HCT116 (cell line): ENCODE measurements at regions of chr21 and their contacts with region 1.

Region 1: GRCh38 chr21:33449616-33450015 is 30.2 kb downstream of the TMEM50B start:
- DNase-seq: no peak
- ATAC-seq: no peak
- H3K4me3 ChIP-seq: no peak overlapping the region
- H3K27ac ChIP-seq: no peak overlapping the region
- H3K4me1 ChIP-seq: peaks cover 3 to 6% of the 10 kb centered on the region in 2 experiments; a peak in 1 of 4 replicates
- H3K27me3 ChIP-seq: no peaks in the 10 kb centered on the region
- CTCF ChIP-seq: no peak
- POLR2A ChIP-seq: no peak
- RAD21 ChIP-seq: no peak

Region 2: GRCh38 chr21:32844653-32845436 is 604.8 kb before region 1 on chr21:
- CTCF ChIA-PET with region 1: no interaction called
- POLR2A ChIA-PET with region 1: no interaction called
- RAD21 ChIA-PET with region 1: no interaction called
- intact Hi-C with region 1: loop called (anchors 5 kb)
- DNase-seq: peak; percentile 21
- ATAC-seq: peak; percentile 83
- H3K4me3 ChIP-seq: no peak overlapping the region
- H3K27ac ChIP-seq: no peak overlapping the region
- H3K4me1 ChIP-seq: peaks cover 9 to 13% of the 10 kb centered on the region in 2 experiments; a peak in 3 of 4 replicates
- H3K27me3 ChIP-seq: peaks cover 37% of the 10 kb centered on the region
- CTCF ChIP-seq: peak in 2 of 3 experiments; percentile 30 to 41; a peak in 3 of 6 replicates
- POLR2A ChIP-seq: no peak
- RAD21 ChIP-seq: no peak

Region 3: GRCh38 chr21:32900814-32901213 is 548.8 kb before region 1 on chr21:
- CTCF ChIA-PET with region 1: no interaction called
- POLR2A ChIA-PET with region 1: no interaction called
- RAD21 ChIA-PET with region 1: no interaction called
- intact Hi-C with region 1: no loop called
- DNase-seq: no peak
- ATAC-seq: no peak
- H3K4me3 ChIP-seq: no peak overlapping the region
- H3K27ac ChIP-seq: no peak overlapping the region
- H3K4me1 ChIP-seq: no peaks in the 10 kb centered on the region
- H3K27me3 ChIP-seq: peaks cover 59% of the 10 kb centered on the region
- CTCF ChIP-seq: no peak
- POLR2A ChIP-seq: no peak
- RAD21 ChIP-seq: no peak

Region 4: GRCh38 chr21:33751120-33751519 is 301.5 kb after region 1 on chr21:
- CTCF ChIA-PET with region 1: no interaction called
- POLR2A ChIA-PET with region 1: no interaction called
- RAD21 ChIA-PET with region 1: no interaction called
- intact Hi-C with region 1: no loop called
- DNase-seq: no peak
- ATAC-seq: no peak
- H3K4me3 ChIP-seq: no peak overlapping the region
- H3K27ac ChIP-seq: no peak overlapping the region
- H3K4me1 ChIP-seq: no peaks in the 10 kb centered on the region
- H3K27me3 ChIP-seq: no peaks in the 10 kb centered on the region
- CTCF ChIP-seq: no peak
- POLR2A ChIP-seq: no peak
- RAD21 ChIP-seq: no peak

Region 5: GRCh38 chr21:33924079-33924765 is 474.6 kb after region 1 on chr21:
- CTCF ChIA-PET with region 1: no interaction called
- POLR2A ChIA-PET with region 1: no interaction called
- RAD21 ChIA-PET with region 1: no interaction called
- intact Hi-C with region 1: no loop called
- DNase-seq: peak; percentile 69
- ATAC-seq: peak; percentile 99
- H3K4me3 ChIP-seq: no peak overlapping the region
- H3K27ac ChIP-seq: no peak overlapping the region
- H3K4me1 ChIP-seq: peaks cover 0 to 10% of the 10 kb centered on the region in 2 experiments; a peak in 2 of 4 replicates
- H3K27me3 ChIP-seq: no peaks in the 10 kb centered on the region
- CTCF ChIP-seq: peak; percentile 83 to 96 (median 88)
- POLR2A ChIP-seq: no peak
- RAD21 ChIP-seq: peak; percentile 96